PC-9 (cell line): ENCODE measurements at regions of chr3 and their contacts with region 1.

Region 1: DNA sequence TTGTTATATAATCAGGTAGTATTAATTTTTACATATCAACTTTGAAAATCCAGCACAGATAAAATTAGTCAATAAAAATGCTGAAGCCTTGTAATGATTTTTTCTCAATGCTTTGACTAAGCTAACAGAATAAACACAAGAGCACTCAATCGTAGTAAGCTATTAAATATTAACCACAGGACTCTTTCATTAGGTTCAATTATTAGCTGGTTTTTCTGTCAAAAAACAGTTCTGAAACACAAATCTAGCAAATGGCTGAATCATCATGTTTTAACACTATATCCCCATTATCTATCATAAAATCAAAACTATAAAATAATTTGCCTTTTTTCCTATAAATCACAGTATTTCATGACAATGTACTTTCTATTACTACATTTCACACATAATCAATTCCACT is 69.6 kb downstream of the PLOD2 start:
- DNase-seq: no peak
- H3K4me3 ChIP-seq: no peak overlapping the region
- H3K27ac ChIP-seq: no peak overlapping the region
- H3K4me1 ChIP-seq: no peaks in the 10 kb centered on the region
- H3K27me3 ChIP-seq: no peaks in the 10 kb centered on the region
- CTCF ChIP-seq: no peak

Region 2: GRCh38 chr3:146078031-146078430 is 13.4 kb before region 1 on chr3:
- CTCF ChIA-PET with region 1: no interaction called
- POLR2A ChIA-PET with region 1: interaction called, 12 read pairs
- intact Hi-C with region 1: no loop called
- DNase-seq: no peak
- H3K4me3 ChIP-seq: no peak overlapping the region
- H3K27ac ChIP-seq: no peak overlapping the region
- H3K4me1 ChIP-seq: no peaks in the 10 kb centered on the region
- H3K27me3 ChIP-seq: no peaks in the 10 kb centered on the region
- CTCF ChIP-seq: no peak